Ascending aorta (tissue), 2 donors: ENCODE measurements at regions of chr15 and their contacts with region 1.

Region 1: DNA sequence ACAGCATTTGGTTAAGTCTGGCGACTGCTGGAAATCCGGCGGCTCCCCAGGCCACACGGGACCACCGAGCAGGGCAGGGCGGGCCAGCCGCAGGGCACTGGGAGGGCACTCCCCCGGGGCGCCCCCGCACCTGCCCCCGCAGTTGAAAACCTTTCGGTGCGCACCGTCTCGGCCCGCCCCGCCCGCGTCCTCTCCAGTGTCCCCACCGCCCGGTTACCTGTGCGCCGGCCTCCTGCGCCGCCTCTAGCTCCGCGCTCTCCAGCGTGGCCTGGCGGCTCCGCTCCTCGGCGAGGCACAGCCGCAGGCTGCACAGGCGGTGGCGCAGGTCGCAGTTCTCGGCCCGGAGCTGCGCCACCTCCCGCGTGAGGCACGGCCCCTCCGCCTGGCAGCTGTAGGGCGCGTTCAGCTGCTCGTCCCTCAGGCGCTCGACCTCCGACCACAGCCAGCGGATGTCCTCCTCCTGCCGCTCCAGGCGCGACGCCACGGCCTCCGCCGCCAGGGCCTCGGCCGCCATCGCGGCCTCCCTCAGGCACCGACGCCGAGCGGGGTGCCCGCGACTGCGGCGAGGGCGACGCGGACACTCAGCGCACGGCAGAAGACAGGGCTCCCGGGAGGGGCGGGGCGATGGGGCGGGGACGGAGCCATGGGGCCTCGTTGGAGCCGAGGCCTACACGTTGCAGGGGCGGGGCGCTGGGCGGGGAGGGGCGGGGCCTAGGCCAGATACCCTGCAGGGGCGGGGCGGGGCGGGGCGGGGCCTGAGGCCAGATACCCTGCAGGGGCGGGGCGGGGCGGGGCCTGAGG is at the start of gene TARS3:
- DNase-seq: peak; percentile 83 to 97
- H3K4me3 ChIP-seq: peak within 1 kb of the TSS; percentile 76 to 82
- H3K27ac ChIP-seq: peak within 1 kb of the TSS; percentile 91 to 92
- H3K4me1 ChIP-seq: peaks cover 0 to 7% of the 10 kb centered on the region in 2 donors
- H3K27me3 ChIP-seq: no peaks in the 10 kb centered on the region
- CTCF ChIP-seq: peak in 1 of 3 experiments; percentile 25
- total RNA-seq, gene TARS3: 39.5 TPM

Region 2: GRCh38 chr15:101652098-101652782 is 71.8 kb before region 1 on chr15 and contains the start of gene TM2D3:
- intact Hi-C with region 1: loop called (anchors 1 kb)
- DNase-seq: peak; percentile 63 to 95
- H3K4me3 ChIP-seq: peak within 1 kb of the TSS; percentile 97 to 98
- H3K27ac ChIP-seq: peak within 1 kb of the TSS; percentile 99 to 100
- H3K4me1 ChIP-seq: peaks cover 0 to 27% of the 10 kb centered on the region in 2 donors
- H3K27me3 ChIP-seq: no peaks in the 10 kb centered on the region
- CTCF ChIP-seq: peak; percentile 74 to 95 (median 84)
- total RNA-seq, gene TM2D3: 105 TPM